ENCODE measurements at regions of chr5 and their contacts with region 1.

Region 1: GRCh38 chr5:159051431-159052282 is 48.1 kb downstream of the EBF1 start:
- DNase-seq: peak in 7 of 35 experiments; percentile 1 to 32 (median 6)
- ATAC-seq: no peak
- H3K4me3 ChIP-seq: peak overlapping the region in 1 of 2 donors; percentile 60
- H3K4me3 Mint-ChIP-seq: peak overlapping the region; percentile 39 to 49 (median 44)
- H3K27ac ChIP-seq: no peak overlapping the region
- H3K27ac Mint-ChIP-seq: peak overlapping the region in 1 of 2 donors; percentile 65
- H3K4me1 ChIP-seq: peaks cover 2 to 4% of the 10 kb centered on the region in 2 experiments
- H3K4me1 Mint-ChIP-seq: peaks cover 0 to 16% (median 8%) of the 10 kb centered on the region in 3 donors
- H3K27me3 ChIP-seq: peaks cover 0 to 21% of the 10 kb centered on the region in 2 experiments
- H3K27me3 Mint-ChIP-seq: peaks cover 71 to 77% of the 10 kb centered on the region in 2 donors

Region 2: GRCh38 chr5:159010661-159011442 is 40.8 kb before region 1 on chr5:
- CTCF ChIA-PET with region 1: no interaction called
- POLR2A ChIA-PET with region 1: no interaction called
- DNase-seq: no peak
- ATAC-seq: peak in 1 of 4 experiments; percentile 29
- H3K4me3 ChIP-seq: no peak overlapping the region
- H3K4me3 Mint-ChIP-seq: peak overlapping the region in 2 of 3 donors; percentile 11 to 54
- H3K27ac ChIP-seq: no peak overlapping the region
- H3K27ac Mint-ChIP-seq: peak overlapping the region in 1 of 2 donors; percentile 9
- H3K4me1 ChIP-seq: no peaks in the 10 kb centered on the region
- H3K4me1 Mint-ChIP-seq: peaks cover 10 to 16% (median 13%) of the 10 kb centered on the region in 3 donors
- H3K27me3 ChIP-seq: no peaks in the 10 kb centered on the region
- H3K27me3 Mint-ChIP-seq: peaks cover 14 to 24% of the 10 kb centered on the region in 2 donors

Region 3: DNA sequence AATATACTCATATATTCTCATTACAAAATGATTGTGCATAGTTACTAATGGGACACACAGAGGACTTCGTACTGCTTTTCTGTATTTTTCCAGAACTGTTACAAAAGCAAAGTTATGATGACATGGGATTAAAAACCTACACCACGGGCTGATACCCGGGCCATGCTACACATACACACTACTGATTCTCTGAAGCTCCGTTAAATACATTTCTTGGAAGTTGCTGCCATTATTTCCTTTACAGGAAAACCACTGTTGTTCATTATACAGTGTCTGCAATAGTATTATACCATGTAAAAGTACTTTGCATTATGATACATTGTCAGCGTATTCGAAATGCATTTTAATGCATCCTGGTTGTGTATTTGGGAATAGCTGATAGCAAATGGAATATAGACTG is 15.5 kb after region 1 on chr5:
- CTCF ChIA-PET with region 1: no interaction called
- POLR2A ChIA-PET with region 1: interaction called, 3 to 13 read pairs
- DNase-seq: no peak
- ATAC-seq: no peak
- H3K4me3 ChIP-seq: no peak overlapping the region
- H3K4me3 Mint-ChIP-seq: no peak overlapping the region
- H3K27ac ChIP-seq: no peak overlapping the region
- H3K27ac Mint-ChIP-seq: no peak overlapping the region
- H3K4me1 ChIP-seq: peaks cover 0 to 13% of the 10 kb centered on the region in 2 experiments
- H3K4me1 Mint-ChIP-seq: peaks cover 5 to 13% (median 7%) of the 10 kb centered on the region in 3 donors
- H3K27me3 ChIP-seq: peaks cover 0 to under 1% of the 10 kb centered on the region in 2 experiments
- H3K27me3 Mint-ChIP-seq: peaks cover 18 to 38% of the 10 kb centered on the region in 2 donors

Region 4: GRCh38 chr5:159257007-159257406 is 205.3 kb after region 1 on chr5:
- CTCF ChIA-PET with region 1: no interaction called
- POLR2A ChIA-PET with region 1: no interaction called
- DNase-seq: no peak
- ATAC-seq: no peak
- H3K4me3 ChIP-seq: no peak overlapping the region
- H3K4me3 Mint-ChIP-seq: no peak overlapping the region
- H3K27ac ChIP-seq: no peak overlapping the region
- H3K27ac Mint-ChIP-seq: no peak overlapping the region
- H3K4me1 ChIP-seq: peaks cover 2 to 4% of the 10 kb centered on the region in 2 experiments
- H3K4me1 Mint-ChIP-seq: peaks cover 7 to 15% (median 10%) of the 10 kb centered on the region in 3 donors
- H3K27me3 ChIP-seq: no peaks in the 10 kb centered on the region
- H3K27me3 Mint-ChIP-seq: no peaks in the 10 kb centered on the region

Region 5: DNA sequence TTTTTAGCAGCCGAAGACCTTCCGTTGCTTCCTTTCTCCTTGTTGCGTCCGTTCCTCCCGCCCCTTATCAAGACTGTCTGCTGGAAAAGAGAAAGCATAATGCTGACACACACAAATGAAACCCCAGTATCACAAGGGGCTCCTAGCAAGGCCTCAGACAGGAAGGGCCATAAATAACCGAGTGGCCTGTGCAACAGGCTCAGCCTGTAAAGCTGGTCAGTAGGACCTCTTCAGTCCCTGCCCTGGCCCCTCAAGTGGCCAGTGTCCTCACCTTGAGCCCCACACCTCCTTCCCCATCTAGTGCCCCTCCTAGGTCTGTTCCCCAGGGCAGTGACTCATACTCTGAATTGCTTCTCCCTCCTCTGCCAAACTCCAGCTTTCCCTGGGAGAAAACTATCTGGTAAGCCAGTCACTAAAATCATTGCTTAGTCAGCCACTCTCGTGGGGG is 453.2 kb after region 1 on chr5:
- CTCF ChIA-PET with region 1: no interaction called
- POLR2A ChIA-PET with region 1: no interaction called
- DNase-seq: no peak
- ATAC-seq: no peak
- H3K4me3 ChIP-seq: no peak overlapping the region
- H3K4me3 Mint-ChIP-seq: no peak overlapping the region
- H3K27ac ChIP-seq: no peak overlapping the region
- H3K27ac Mint-ChIP-seq: no peak overlapping the region
- H3K4me1 ChIP-seq: no peaks in the 10 kb centered on the region
- H3K4me1 Mint-ChIP-seq: no peaks in the 10 kb centered on the region
- H3K27me3 ChIP-seq: peaks cover 0 to 3% of the 10 kb centered on the region in 2 experiments
- H3K27me3 Mint-ChIP-seq: peaks cover 0 to 2% of the 10 kb centered on the region in 2 donors

Region 6: DNA sequence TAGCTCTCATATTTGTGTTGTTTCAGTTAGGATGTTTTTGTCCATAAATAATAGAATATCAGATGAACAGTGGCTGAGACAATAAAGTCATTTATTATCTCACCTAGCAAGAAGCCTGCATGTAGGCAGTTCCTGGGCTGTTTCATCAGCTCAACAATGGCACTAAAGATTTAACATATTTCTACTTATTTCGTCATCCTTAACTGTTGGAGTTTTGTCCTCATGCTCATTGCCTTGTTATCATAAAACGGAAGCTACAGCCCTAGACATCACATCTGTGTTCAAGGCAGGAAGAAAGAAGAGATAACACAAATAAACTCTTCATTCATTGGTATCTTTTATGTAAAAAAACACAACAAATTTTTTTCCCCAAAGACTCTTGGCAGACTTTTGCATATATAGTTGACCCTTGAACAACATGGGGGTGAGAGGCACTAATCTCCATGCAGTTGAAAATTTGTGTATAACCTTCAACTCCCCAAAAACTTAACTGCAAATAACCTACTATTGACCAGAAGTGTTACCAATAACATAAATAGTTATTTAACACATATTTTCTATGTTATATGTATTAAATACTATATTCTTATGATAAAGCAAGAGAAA is 587.4 kb after region 1 on chr5:
- CTCF ChIA-PET with region 1: no interaction called
- POLR2A ChIA-PET with region 1: no interaction called
- DNase-seq: no peak
- ATAC-seq: no peak
- H3K4me3 ChIP-seq: no peak overlapping the region
- H3K4me3 Mint-ChIP-seq: no peak overlapping the region
- H3K27ac ChIP-seq: no peak overlapping the region
- H3K27ac Mint-ChIP-seq: no peak overlapping the region
- H3K4me1 ChIP-seq: no peaks in the 10 kb centered on the region
- H3K4me1 Mint-ChIP-seq: no peaks in the 10 kb centered on the region
- H3K27me3 ChIP-seq: peaks cover 0 to 4% of the 10 kb centered on the region in 2 experiments
- H3K27me3 Mint-ChIP-seq: peaks cover 6 to 12% of the 10 kb centered on the region in 2 donors